Naive thymus-derived CD4-positive, alpha-beta T cell (primary cell): ENCODE measurements at regions of chr10 and their contacts with region 1.

Region 1: DNA sequence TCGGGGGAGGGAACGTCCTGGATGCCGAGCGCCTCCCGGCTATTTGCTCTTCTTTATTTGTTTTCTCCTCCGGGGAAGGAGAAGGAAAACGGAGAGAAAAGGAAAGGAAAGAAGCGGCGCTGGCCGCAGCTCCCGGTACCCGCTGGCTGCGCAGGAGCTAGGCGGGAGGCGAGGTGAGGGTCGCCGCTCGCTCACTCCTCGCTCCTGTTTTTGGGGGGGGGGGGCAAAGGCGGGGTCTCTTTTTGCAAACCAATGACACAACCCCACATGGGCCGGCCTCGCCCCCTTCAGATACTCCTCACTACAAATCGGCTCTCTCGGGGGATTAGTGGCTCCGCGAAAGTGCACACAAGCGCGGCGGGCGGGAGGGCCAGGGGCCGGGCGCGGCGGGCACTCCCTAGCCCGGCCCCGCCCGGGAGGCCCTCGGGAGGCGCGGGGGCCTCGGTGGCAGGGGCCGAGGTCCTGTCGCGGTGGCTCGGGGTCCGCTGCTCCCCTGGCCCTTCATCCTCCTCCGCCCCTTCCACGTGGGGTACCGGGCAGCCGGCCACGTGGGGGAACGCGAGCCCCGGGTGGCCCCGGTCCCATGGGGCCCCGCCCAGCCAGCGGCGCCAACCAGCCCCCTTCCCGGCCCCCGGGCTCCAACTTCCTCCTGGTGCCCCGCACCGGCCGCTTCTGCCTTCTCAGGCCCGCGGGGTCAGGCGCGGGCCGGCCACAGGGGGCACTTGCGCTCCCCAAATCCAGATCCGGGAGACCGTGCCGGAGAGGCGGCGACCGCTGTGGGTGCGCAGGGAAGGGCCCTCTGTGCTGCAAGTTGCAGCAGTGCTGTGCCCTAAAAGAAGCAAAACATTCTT is 718 bp upstream of the CTBP2 start:
- DNase-seq: peak in 1 of 9 donors; percentile 34
- ATAC-seq: peak; percentile 78
- H3K4me3 ChIP-seq: no peak overlapping the region
- H3K4me3 Mint-ChIP-seq: peak overlapping the region in 9 of 10 donors; percentile 23 to 74 (median 61)
- H3K27ac ChIP-seq: no peak overlapping the region
- H3K27ac Mint-ChIP-seq: no peak overlapping the region
- H3K4me1 ChIP-seq: no peaks in the 10 kb centered on the region
- H3K4me1 Mint-ChIP-seq: peaks cover 3 to 16% (median 6%) of the 10 kb centered on the region in 7 donors
- H3K27me3 ChIP-seq: peaks cover 0 to 4% of the 10 kb centered on the region in 2 donors
- H3K27me3 Mint-ChIP-seq: peaks cover 35 to 57% (median 48%) of the 10 kb centered on the region in 5 donors

Region 2: GRCh38 chr10:124447741-124448466 is 713.2 kb before region 1 on chr10:
- CTCF ChIA-PET with region 1: no interaction called
- POLR2A ChIA-PET with region 1: no interaction called
- intact Hi-C with region 1: loop called in 1 of 2 experiments (anchors 10 kb)
- DNase-seq: no peak
- ATAC-seq: no peak
- H3K4me3 ChIP-seq: no peak overlapping the region
- H3K4me3 Mint-ChIP-seq: peak overlapping the region; percentile 16 to 87 (median 65)
- H3K27ac ChIP-seq: no peak overlapping the region
- H3K27ac Mint-ChIP-seq: no peak overlapping the region
- H3K4me1 ChIP-seq: peaks cover 0 to 9% of the 10 kb centered on the region in 2 donors
- H3K4me1 Mint-ChIP-seq: peaks cover 0 to 26% (median 20%) of the 10 kb centered on the region in 7 donors
- H3K27me3 ChIP-seq: peaks cover 6 to 14% of the 10 kb centered on the region in 2 donors
- H3K27me3 Mint-ChIP-seq: peaks cover 60 to 84% (median 73%) of the 10 kb centered on the region in 5 donors